ENCODE measurements at regions of chr15 and their contacts with region 1.

Region 1: GRCh38 chr15:57146506-57147201 is 228.2 kb downstream of the TCF12 start:
- DNase-seq: no peak
- H3K4me3 ChIP-seq: peak overlapping the region in 1 of 2 donors; percentile 11
- H3K27ac ChIP-seq: peak overlapping the region; percentile 61
- H3K4me1 ChIP-seq: peaks cover 49% of the 10 kb centered on the region
- H3K27me3 ChIP-seq: no peaks in the 10 kb centered on the region
- CTCF ChIP-seq: peak; percentile 12 to 78 (median 63)
- POLR2A ChIP-seq: no peak

Region 2: DNA sequence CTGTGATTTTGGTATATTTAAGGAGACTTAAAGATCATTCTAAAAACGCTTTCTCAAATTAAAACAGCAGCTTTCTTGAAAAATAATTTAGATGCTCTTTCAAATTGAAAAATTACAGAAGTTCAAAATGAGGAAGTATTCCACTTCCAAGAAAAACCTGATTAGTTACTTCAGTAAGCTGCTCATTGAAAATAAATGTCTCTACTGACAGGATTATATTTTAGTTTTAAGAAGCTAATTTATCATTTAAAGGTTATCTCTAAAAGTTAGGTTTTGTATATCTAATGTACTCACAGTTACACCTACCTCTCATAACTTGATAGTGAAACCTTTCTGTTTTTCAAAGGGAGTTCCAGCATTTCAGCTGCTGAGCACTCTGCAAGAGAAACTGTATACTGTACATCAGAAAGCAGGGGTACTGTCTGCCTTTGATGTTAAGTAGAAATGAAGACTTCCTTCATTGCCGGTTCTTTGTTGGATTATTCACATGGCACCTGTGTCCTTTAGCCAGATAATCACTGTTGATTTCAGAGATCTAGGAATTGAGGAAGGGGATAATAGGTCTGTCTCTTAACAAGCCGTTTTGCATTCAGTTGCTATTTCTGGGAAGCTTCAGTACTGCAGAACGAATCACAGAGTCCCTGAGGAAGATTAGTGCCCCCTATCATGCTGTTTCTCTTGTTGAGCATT is 66.6 kb before region 1 on chr15:
- intact Hi-C with region 1: no loop called
- DNase-seq: no peak
- H3K4me3 ChIP-seq: no peak overlapping the region
- H3K27ac ChIP-seq: no peak overlapping the region
- H3K4me1 ChIP-seq: peaks cover 17% of the 10 kb centered on the region
- H3K27me3 ChIP-seq: no peaks in the 10 kb centered on the region
- CTCF ChIP-seq: no peak
- POLR2A ChIP-seq: no peak

Region 3: GRCh38 chr15:57165992-57166391 is 19.3 kb after region 1 on chr15:
- intact Hi-C with region 1: no loop called
- DNase-seq: no peak
- H3K4me3 ChIP-seq: no peak overlapping the region
- H3K27ac ChIP-seq: no peak overlapping the region
- H3K4me1 ChIP-seq: no peaks in the 10 kb centered on the region
- H3K27me3 ChIP-seq: no peaks in the 10 kb centered on the region
- CTCF ChIP-seq: no peak
- POLR2A ChIP-seq: no peak

Region 4: GRCh38 chr15:57213862-57214261 is 67.2 kb after region 1 on chr15:
- intact Hi-C with region 1: loop called (anchors 10 kb)
- DNase-seq: no peak
- H3K4me3 ChIP-seq: no peak overlapping the region
- H3K27ac ChIP-seq: no peak overlapping the region
- H3K4me1 ChIP-seq: peaks cover 65% of the 10 kb centered on the region
- H3K27me3 ChIP-seq: no peaks in the 10 kb centered on the region
- CTCF ChIP-seq: peak; percentile 4 to 32 (median 27)
- POLR2A ChIP-seq: no peak

Region 5: DNA sequence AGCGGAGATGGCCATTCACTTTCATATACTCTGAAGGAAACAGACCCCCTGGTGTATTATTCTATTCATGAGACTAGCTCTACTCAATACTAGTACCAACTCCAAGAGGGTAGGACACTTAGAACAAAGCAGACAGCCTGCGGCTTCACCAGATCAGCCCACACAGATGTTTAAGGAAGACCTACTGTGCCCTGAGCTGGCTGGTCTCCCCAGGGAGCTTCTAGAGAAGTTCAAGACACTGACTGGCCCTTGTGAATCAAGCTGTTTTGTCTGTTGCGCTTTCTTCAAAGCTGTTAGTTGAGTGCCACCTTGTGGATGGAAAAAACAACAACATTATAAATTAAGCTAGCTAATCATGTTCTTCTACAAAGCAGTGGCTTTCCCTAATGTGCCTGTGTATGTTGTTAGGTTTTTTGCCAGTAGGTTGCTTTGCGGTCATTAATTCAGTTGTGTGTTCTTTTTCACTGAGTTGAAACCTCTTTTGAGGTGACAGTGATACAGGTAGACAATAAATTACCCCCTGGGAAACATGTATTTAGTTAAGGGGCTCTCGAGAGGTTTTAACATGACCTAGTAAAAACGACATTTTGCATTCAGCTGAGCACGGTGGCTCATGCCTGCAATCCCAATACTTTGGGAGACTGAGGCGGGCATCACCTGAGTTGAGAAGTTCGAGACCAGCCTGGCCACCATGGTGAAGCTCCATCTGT is 380.9 kb after region 1 on chr15:
- intact Hi-C with region 1: loop called (anchors 10 kb)
- DNase-seq: no peak
- H3K4me3 ChIP-seq: no peak overlapping the region
- H3K27ac ChIP-seq: peak overlapping the region; percentile 45
- H3K4me1 ChIP-seq: peaks cover 35% of the 10 kb centered on the region
- H3K27me3 ChIP-seq: no peaks in the 10 kb centered on the region
- CTCF ChIP-seq: peak; percentile 60 to 84 (median 66)
- POLR2A ChIP-seq: no peak

Measured in vagina (tissue), 2 donors.